ENCODE measurements at regions of chr3 and their contacts with region 1.

Region 1: GRCh38 chr3:42635111-42635510 is 18.4 kb upstream of the ZBTB47 start:
- DNase-seq: no peak
- H3K4me3 Mint-ChIP-seq: peak overlapping the region; percentile 30
- H3K27ac Mint-ChIP-seq: peak overlapping the region; percentile 67
- H3K4me1 Mint-ChIP-seq: peaks cover 20% of the 10 kb centered on the region
- H3K27me3 Mint-ChIP-seq: no peaks in the 10 kb centered on the region

Region 2: GRCh38 chr3:41317718-41318117 is 1317.4 kb before region 1 on chr3:
- intact Hi-C with region 1: no loop called
- DNase-seq: no peak
- H3K4me3 Mint-ChIP-seq: no peak overlapping the region
- H3K27ac Mint-ChIP-seq: no peak overlapping the region
- H3K4me1 Mint-ChIP-seq: no peaks in the 10 kb centered on the region
- H3K27me3 Mint-ChIP-seq: peaks cover 4% of the 10 kb centered on the region

Region 3: DNA sequence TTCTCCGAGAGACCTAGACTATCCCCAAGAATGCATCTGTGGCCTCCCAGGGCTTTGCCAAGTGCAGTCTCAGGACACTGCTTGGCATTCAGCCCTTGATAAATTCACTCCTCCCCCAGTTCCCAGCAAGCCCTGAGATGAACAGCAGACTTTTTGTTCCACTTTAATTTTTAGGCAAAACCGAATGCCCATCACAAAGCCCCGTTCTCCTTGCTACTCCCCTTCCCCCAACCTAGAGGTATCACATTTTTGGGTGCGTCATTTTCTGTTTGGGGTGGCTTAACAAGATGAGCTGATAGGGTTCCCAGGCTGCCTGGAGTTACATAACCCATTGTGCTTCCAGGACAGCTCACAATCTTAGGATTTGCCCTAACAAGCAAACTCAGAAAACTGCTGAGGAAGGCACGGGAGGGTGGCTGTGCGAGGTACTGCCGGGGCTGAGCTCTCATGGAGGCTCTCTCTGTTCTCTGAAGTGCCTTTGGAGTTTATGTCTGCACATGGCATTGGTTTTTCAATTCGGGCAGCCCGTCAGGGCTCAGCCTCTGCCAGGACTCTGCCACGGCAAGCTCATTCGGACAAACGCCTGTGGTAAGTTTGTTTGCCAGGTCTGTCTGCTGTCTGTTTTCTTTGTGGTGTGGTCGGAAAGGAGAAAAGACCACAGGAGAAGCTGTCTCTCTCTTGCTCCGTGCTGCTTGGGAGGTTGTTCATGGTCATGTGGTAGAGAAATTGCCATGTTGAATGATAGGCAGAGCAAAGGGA is 544.0 kb before region 1 on chr3 and contains the start of gene TRAK1:
- intact Hi-C with region 1: loop called (anchors 2 kb)
- DNase-seq: no peak
- H3K4me3 Mint-ChIP-seq: peak within 1 kb of the TSS; percentile 11
- H3K27ac Mint-ChIP-seq: peak within 1 kb of the TSS; percentile 64
- H3K4me1 Mint-ChIP-seq: peaks cover 53% of the 10 kb centered on the region
- H3K27me3 Mint-ChIP-seq: no peaks in the 10 kb centered on the region
- total RNA-seq, gene TRAK1: 32.6 and 33.8 TPM in 2 replicates

Region 4: DNA sequence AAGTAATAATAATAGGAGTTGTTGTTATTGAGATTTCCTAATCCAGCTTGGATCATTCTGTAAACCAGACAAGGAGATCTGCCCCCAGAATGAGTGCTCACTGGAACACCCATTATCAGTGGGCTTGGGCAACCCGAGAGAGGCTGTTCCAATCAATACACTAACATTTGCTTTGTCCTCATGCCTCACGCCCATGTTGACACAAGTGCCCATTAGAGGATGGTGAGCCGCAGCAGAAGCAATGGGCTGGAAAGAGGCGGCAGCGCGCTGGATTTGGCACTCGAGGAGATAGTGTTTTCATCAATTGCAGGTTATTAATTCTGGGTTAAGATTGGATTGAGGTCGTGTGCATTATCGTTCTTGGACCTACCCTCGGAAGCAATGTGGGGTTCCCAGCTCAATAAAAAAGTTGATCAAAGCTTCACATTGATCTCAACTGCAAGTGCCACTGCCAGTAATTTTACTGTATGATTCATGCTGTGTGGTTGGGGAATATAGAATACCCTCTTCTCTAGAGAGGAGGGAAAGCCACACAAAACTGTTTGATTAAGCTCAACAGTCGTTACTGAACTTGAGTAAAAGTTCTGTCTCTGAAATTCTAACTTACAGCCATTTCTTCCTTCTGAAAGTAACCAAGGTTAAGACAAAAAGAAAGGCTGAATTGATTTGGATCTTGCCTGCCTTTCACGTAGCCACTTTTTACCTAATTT is 240.4 kb before region 1 on chr3:
- intact Hi-C with region 1: no loop called
- DNase-seq: no peak
- H3K4me3 Mint-ChIP-seq: no peak overlapping the region
- H3K27ac Mint-ChIP-seq: no peak overlapping the region
- H3K4me1 Mint-ChIP-seq: no peaks in the 10 kb centered on the region
- H3K27me3 Mint-ChIP-seq: peaks cover 4% of the 10 kb centered on the region

Region 5: DNA sequence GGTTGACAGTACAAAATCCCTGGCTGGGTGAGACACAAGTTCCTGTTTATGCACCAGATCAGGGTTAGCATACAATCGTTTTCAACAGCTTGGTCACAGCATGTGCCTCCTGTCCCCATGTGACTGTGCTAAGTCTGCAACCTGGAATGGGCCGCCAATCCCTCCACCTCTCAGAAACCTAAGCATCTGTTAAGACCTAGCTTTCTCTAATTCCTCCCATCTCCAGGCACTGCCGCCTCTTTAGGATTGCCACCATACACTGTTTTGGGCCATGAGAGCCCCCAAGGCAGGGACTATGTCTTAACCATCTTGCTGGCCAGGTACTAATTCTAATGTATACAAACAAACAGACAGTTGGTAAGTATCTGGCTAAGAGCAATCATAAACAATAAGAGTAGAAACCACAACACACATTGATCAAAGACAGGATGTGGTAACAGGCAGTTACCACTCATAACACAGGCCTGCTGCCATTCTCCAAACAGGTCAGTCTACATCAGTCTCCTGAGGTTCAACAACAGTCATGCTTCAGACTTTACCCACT is 79.0 kb before region 1 on chr3:
- intact Hi-C with region 1: loop called (anchors 1 kb)
- DNase-seq: peak; percentile 52
- H3K4me3 Mint-ChIP-seq: peak overlapping the region; percentile 52
- H3K27ac Mint-ChIP-seq: peak overlapping the region; percentile 94
- H3K4me1 Mint-ChIP-seq: peaks cover 41% of the 10 kb centered on the region
- H3K27me3 Mint-ChIP-seq: no peaks in the 10 kb centered on the region

Region 6: GRCh38 chr3:42590989-42591756 is 43.9 kb before region 1 on chr3:
- intact Hi-C with region 1: loop called (anchors 1 kb)
- DNase-seq: no peak
- H3K4me3 Mint-ChIP-seq: peak overlapping the region; percentile 98
- H3K27ac Mint-ChIP-seq: peak overlapping the region; percentile 99
- H3K4me1 Mint-ChIP-seq: peaks cover 41% of the 10 kb centered on the region
- H3K27me3 Mint-ChIP-seq: no peaks in the 10 kb centered on the region

Region 7: GRCh38 chr3:42652611-42653302 is 17.6 kb after region 1 on chr3:
- intact Hi-C with region 1: loop called (anchors 1 kb)
- DNase-seq: no peak
- H3K4me3 Mint-ChIP-seq: peak overlapping the region; percentile 85
- H3K27ac Mint-ChIP-seq: peak overlapping the region; percentile 63
- H3K4me1 Mint-ChIP-seq: peaks cover 23% of the 10 kb centered on the region
- H3K27me3 Mint-ChIP-seq: peaks cover 5% of the 10 kb centered on the region

Region 8: DNA sequence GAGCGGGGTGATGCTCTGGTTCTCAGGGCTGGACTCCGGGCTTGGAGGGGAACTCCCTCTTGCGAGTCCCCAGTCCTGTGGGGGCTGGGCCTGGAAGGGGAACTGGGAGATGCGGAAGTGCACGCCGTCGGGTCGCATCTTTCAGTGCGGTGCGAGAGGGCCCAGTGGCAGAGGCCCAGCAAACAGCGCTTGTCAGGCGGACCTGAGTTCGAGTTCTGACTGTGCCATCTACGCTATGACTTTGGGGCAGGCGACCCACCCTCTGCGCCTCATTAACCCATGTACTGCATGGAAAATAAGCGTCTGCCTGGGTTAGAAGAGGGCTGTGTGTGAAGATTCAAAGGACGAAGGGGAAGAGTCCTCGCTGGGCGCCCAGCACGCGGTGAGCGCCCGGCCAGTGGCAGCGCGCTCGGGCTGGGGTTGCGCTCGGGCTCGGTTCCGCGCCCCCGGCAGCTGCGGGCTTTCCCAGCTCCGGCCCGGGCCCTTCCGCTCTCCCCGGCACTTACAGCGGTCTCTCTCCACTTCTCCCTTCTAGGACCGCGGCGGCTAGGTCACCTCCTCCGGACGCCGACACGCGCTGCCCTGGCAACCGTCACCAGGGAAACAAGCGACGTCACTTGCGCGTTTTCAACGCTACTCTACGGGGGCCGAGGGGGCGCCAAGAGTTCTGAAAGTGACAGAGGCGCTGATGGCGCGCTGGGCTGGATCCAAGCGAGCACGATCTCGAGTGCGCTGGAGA is 137.7 kb after region 1 on chr3 and contains the start of gene CCDC13:
- intact Hi-C with region 1: loop called (anchors 1 kb)
- DNase-seq: peak; percentile 86
- H3K4me3 Mint-ChIP-seq: peak within 1 kb of the TSS; percentile 85
- H3K27ac Mint-ChIP-seq: peak within 1 kb of the TSS; percentile 85
- H3K4me1 Mint-ChIP-seq: peaks cover 12% of the 10 kb centered on the region
- H3K27me3 Mint-ChIP-seq: peaks cover 9% of the 10 kb centered on the region
- total RNA-seq, gene CCDC13: 0.32 TPM in 1 of 2 replicates, not detected in the other

Region 9: DNA sequence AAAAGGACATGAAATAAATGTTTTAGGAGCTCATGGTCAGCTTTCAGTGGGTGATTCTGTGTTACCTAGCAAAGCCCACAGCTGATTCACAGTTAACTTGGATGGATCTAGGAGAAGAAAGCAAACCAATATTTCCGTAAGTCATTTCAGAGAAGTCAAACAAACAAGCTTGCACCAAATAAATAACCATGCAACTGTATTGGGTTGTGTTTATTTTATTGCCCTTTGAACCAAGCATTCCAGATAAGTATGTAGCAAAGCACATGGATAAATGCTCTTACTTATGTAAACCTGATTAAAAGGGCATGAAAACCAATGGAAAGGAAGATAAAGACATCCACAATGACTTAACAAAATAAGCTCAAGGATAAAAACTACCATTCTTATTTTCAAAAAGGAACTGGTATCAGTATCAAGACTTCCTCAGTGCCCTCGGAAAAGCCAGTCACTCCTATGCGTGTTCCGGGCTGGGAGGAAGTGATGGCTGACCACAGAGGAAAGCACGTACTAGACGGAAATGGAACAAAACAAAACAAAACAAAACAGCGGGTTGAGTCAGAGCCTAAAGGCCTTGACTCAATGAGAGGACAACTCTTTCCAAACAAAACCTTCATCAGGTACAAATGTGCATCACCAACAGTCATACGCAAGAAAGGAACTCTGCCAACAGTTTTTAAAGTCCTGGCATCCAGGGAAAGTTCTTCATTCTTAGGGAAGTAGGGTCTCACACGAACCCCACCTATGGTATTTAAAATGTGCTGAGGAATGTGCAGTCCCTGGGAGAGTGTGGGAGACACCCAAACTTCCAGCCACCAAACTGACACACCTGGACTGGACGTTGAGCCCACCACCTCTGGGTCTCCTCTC is 754.5 kb after region 1 on chr3:
- intact Hi-C with region 1: loop called (anchors 1 kb)
- DNase-seq: peak; percentile 72
- H3K4me3 Mint-ChIP-seq: peak overlapping the region; percentile 35
- H3K27ac Mint-ChIP-seq: peak overlapping the region; percentile 81
- H3K4me1 Mint-ChIP-seq: peaks cover 52% of the 10 kb centered on the region
- H3K27me3 Mint-ChIP-seq: peaks cover 6% of the 10 kb centered on the region